ENCODE measurements at regions of chr9 and their contacts with region 1.

Region 1: GRCh38 chr9:122904823-122905710 is at the start of gene RC3H2:
- DNase-seq: peak; percentile 99
- ATAC-seq: peak; percentile 91
- H3K4me3 ChIP-seq: peak within 1 kb of the TSS; percentile 67 to 95 (median 85)
- H3K4me3 Mint-ChIP-seq: peak within 1 kb of the TSS; percentile 97
- H3K27ac ChIP-seq: peak within 1 kb of the TSS; percentile 79 to 94
- H3K27ac Mint-ChIP-seq: peak within 1 kb of the TSS; percentile 99
- H3K4me1 ChIP-seq: peaks cover 17 to 28% of the 10 kb centered on the region in 2 donors
- H3K4me1 Mint-ChIP-seq: peaks cover 29% of the 10 kb centered on the region
- H3K27me3 ChIP-seq: no peaks in the 10 kb centered on the region
- H3K27me3 Mint-ChIP-seq: no peaks in the 10 kb centered on the region
- CTCF ChIP-seq: peak; percentile 12
- total RNA-seq, gene RC3H2: 74.4 and 77.3 TPM in 2 replicates

Region 2: GRCh38 chr9:122827761-122828093 is 77.3 kb before region 1 on chr9:
- CTCF ChIA-PET with region 1: interaction called, 3 read pairs
- POLR2A ChIA-PET with region 1: no interaction called
- intact Hi-C with region 1: loop called (anchors 1 kb)
- DNase-seq: no peak
- ATAC-seq: peak; percentile 1
- H3K4me3 ChIP-seq: peak overlapping the region; percentile 74 to 98 (median 77)
- H3K4me3 Mint-ChIP-seq: peak overlapping the region; percentile 92
- H3K27ac ChIP-seq: peak overlapping the region; percentile 82 to 85
- H3K27ac Mint-ChIP-seq: peak overlapping the region; percentile 88
- H3K4me1 ChIP-seq: peaks cover 8 to 20% of the 10 kb centered on the region in 2 donors
- H3K4me1 Mint-ChIP-seq: peaks cover 31% of the 10 kb centered on the region
- H3K27me3 ChIP-seq: no peaks in the 10 kb centered on the region
- H3K27me3 Mint-ChIP-seq: no peaks in the 10 kb centered on the region
- CTCF ChIP-seq: no peak

Region 3: GRCh38 chr9:122931226-122932121 is 26.4 kb after region 1 on chr9 and contains the start of gene ZBTB26:
- CTCF ChIA-PET with region 1: interaction called, 4 read pairs
- POLR2A ChIA-PET with region 1: interaction called, 9 read pairs
- intact Hi-C with region 1: loop called (anchors 2 kb)
- DNase-seq: peak; percentile 93
- ATAC-seq: peak; percentile 98
- H3K4me3 ChIP-seq: peak within 1 kb of the TSS; percentile 72 to 96 (median 91)
- H3K4me3 Mint-ChIP-seq: no peak within 1 kb of the TSS
- H3K27ac ChIP-seq: peak within 1 kb of the TSS; percentile 75 to 93
- H3K27ac Mint-ChIP-seq: peak within 1 kb of the TSS; percentile 91
- H3K4me1 ChIP-seq: peaks cover 19 to 24% of the 10 kb centered on the region in 2 donors
- H3K4me1 Mint-ChIP-seq: peaks cover 21% of the 10 kb centered on the region
- H3K27me3 ChIP-seq: no peaks in the 10 kb centered on the region
- H3K27me3 Mint-ChIP-seq: no peaks in the 10 kb centered on the region
- CTCF ChIP-seq: no peak
- total RNA-seq, gene ZBTB26: 16.4 and 17.2 TPM in 2 replicates

Region 4: DNA sequence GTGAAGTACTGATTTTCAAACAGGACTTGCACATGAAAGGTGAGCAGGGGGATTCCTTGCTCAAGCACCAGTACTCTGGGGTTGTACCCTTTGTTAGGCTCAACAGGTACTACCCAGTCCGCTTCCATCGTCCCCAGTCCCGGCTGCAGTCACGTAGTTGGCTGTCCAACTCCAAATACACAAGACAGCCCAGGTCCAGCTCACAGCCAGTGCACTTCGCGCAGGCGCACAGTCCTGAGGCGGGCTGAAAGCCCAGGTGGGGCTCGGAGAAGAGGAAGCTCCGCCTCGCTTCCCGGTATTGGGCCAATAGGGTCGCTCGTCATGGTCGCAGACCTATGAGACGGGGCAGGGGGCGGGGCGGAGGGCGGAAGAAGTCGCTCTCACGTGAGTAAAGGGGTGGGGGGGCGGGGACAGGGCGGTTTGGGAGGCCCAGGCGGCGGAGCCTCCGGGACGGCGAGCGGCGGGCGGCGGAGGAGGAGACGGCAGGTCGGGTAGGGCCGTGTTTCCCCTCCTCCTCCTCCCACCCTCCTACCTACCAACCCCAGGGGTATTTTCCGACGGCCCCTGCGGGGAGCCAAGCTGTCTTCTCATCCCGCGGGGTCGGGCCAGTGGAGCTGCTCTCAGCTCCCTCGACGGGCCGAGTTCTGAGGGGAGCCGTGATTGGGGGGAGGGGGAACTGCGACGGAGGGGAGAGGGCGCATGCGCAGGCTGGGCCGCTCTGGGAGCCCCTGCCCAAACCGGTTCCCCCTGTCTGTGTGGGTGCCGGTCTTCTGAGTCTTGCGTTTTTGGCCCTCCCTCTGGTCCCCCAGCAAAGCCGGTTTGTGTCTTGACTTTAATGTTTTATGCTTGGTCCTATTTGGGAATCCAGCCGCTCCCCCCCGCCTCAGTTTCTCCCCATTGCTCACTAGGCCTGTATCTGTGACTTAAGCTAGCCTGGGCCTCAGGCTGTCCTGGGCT is 35.8 kb after region 1 on chr9 and contains the start of gene RABGAP1:
- CTCF ChIA-PET with region 1: interaction called, 7 read pairs
- POLR2A ChIA-PET with region 1: interaction called, 12 read pairs
- intact Hi-C with region 1: loop called (anchors 1 kb)
- DNase-seq: peak; percentile 98
- ATAC-seq: peak; percentile 99
- H3K4me3 ChIP-seq: peak within 1 kb of the TSS; percentile 75 to 85 (median 83)
- H3K4me3 Mint-ChIP-seq: peak within 1 kb of the TSS; percentile 89
- H3K27ac ChIP-seq: peak within 1 kb of the TSS; percentile 77 to 91
- H3K27ac Mint-ChIP-seq: peak within 1 kb of the TSS; percentile 81
- H3K4me1 ChIP-seq: peaks cover 16 to 17% of the 10 kb centered on the region in 2 donors
- H3K4me1 Mint-ChIP-seq: peaks cover 34% of the 10 kb centered on the region
- H3K27me3 ChIP-seq: no peaks in the 10 kb centered on the region
- H3K27me3 Mint-ChIP-seq: no peaks in the 10 kb centered on the region
- CTCF ChIP-seq: no peak
- total RNA-seq, gene RABGAP1: 79.7 and 81.0 TPM in 2 replicates

Region 5: GRCh38 chr9:122991370-122991830 is 86.3 kb after region 1 on chr9:
- CTCF ChIA-PET with region 1: interaction called, 6 read pairs
- POLR2A ChIA-PET with region 1: no interaction called
- intact Hi-C with region 1: loop called (anchors 2 kb)
- DNase-seq: peak; percentile 52
- ATAC-seq: peak; percentile 58
- H3K4me3 ChIP-seq: no peak overlapping the region
- H3K4me3 Mint-ChIP-seq: no peak overlapping the region
- H3K27ac ChIP-seq: no peak overlapping the region
- H3K27ac Mint-ChIP-seq: no peak overlapping the region
- H3K4me1 ChIP-seq: no peaks in the 10 kb centered on the region
- H3K4me1 Mint-ChIP-seq: peaks cover 3% of the 10 kb centered on the region
- H3K27me3 ChIP-seq: no peaks in the 10 kb centered on the region
- H3K27me3 Mint-ChIP-seq: no peaks in the 10 kb centered on the region
- CTCF ChIP-seq: peak; percentile 81

Region 6: DNA sequence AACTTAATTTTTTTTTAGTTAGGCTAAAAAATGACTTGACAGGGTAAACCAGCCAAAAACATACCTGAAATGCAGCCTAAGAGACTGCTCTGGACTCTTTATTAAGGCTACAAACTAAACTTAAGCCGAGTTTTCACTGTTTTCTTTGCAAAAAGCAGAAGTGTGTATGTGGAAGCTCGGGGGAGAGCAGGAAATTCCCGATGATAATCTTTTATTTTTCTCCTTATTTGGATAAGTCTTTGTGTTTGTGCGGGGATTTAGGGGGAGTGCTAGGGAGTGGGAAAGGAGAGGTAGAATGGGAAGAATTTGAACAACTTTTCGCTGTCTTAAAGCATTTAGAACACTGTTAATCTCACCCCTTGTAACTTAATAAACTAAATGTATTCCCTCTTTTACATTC is 97.7 kb after region 1 on chr9:
- CTCF ChIA-PET with region 1: no interaction called
- POLR2A ChIA-PET with region 1: no interaction called
- intact Hi-C with region 1: no loop called
- DNase-seq: no peak
- ATAC-seq: no peak
- H3K4me3 ChIP-seq: no peak overlapping the region
- H3K4me3 Mint-ChIP-seq: no peak overlapping the region
- H3K27ac ChIP-seq: peak overlapping the region in 1 of 2 donors; percentile 28
- H3K27ac Mint-ChIP-seq: no peak overlapping the region
- H3K4me1 ChIP-seq: peaks cover 0 to 3% of the 10 kb centered on the region in 2 donors
- H3K4me1 Mint-ChIP-seq: peaks cover 3% of the 10 kb centered on the region
- H3K27me3 ChIP-seq: no peaks in the 10 kb centered on the region
- H3K27me3 Mint-ChIP-seq: no peaks in the 10 kb centered on the region
- CTCF ChIP-seq: no peak

Region 7: DNA sequence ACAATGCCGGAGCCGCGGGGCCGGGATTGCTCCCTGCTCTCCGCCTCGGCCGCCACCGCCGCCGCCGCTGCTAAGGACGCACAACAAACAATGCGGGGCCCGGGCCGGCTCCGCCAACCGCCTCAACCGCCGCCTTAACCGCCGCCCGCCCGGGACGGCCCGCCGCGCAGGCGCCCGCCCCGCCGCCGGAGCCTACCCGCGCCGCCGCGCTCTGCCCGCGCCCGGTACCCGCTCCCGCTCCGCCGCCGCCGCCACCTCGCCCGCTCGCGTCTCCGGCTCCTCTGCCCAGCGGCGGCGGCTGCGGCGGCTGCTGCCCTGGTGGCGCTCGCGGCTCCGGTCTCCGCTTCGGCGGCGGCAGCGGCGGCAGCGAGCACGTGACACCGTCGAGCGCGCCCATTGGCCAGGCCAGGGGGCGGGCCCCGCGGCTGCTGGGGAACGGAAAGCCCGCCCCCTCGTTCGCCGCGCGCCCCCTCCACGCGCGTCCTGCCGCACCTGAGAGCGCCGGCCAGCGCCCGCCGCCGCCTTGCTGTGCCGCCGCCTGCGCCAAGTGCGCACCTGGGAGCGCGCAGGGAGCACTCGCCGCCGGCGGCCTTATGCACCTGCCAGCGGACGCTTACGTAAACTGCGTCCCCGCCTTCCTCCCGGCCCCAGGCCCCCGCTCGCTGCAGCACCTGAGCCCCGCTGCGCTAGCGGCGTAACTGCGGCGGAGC is 363.3 kb after region 1 on chr9 and contains the start of gene STRBP:
- CTCF ChIA-PET with region 1: no interaction called
- POLR2A ChIA-PET with region 1: no interaction called
- intact Hi-C with region 1: loop called (anchors 10 kb)
- DNase-seq: peak; percentile 99
- ATAC-seq: peak; percentile 91
- H3K4me3 ChIP-seq: peak within 1 kb of the TSS; percentile 55 to 95 (median 79)
- H3K4me3 Mint-ChIP-seq: peak within 1 kb of the TSS; percentile 91
- H3K27ac ChIP-seq: peak within 1 kb of the TSS; percentile 84 to 93
- H3K27ac Mint-ChIP-seq: peak within 1 kb of the TSS; percentile 89
- H3K4me1 ChIP-seq: peaks cover 41 to 51% of the 10 kb centered on the region in 2 donors
- H3K4me1 Mint-ChIP-seq: peaks cover 46% of the 10 kb centered on the region
- H3K27me3 ChIP-seq: no peaks in the 10 kb centered on the region
- H3K27me3 Mint-ChIP-seq: no peaks in the 10 kb centered on the region
- CTCF ChIP-seq: no peak
- total RNA-seq, gene STRBP: 189 and 197 TPM in 2 replicates